ENCODE measurements at regions of chr18 and their contacts with region 1.

Region 1: GRCh38 chr18:58975781-58976180 is 111.1 kb downstream of the ZNF532 start:
- DNase-seq: no peak
- ATAC-seq: no peak
- H3K4me3 ChIP-seq: no peak overlapping the region
- H3K4me3 Mint-ChIP-seq: no peak overlapping the region
- H3K27ac ChIP-seq: no peak overlapping the region
- H3K27ac Mint-ChIP-seq: no peak overlapping the region
- H3K4me1 ChIP-seq: no peaks in the 10 kb centered on the region
- H3K4me1 Mint-ChIP-seq: no peaks in the 10 kb centered on the region
- H3K27me3 ChIP-seq: peaks cover 0 to 10% of the 10 kb centered on the region in 2 experiments
- H3K27me3 Mint-ChIP-seq: peaks cover 26 to 29% of the 10 kb centered on the region in 2 donors

Region 2: DNA sequence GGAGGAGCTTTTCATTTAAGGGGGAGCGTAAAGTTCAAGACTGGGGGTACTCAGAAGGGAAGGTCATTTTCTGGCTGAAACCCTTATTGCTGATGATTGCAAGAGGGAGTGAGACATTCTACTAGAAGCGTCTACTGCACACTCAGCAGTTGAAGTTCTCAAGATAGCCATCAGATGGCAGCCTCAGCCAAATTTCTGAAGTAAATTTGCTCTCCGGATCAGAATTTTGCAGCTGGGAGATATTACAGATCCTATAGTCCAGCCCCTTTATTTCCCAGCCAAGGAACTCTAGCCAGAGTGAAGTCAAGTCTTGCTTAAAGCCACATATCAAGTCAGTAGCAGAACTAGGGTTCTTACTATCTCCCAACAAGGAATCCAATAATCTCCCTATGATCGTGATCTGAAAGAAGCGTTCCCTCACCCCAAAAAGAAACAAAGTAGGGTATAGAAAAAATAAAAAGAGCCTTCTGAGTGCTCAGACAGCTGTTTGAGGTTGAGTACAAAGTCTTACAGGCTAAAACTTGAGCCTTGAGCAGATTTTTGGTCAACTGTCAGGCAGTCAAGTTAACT is 273.5 kb after region 1 on chr18:
- CTCF ChIA-PET with region 1: interaction called in 1 of 2 experiments, 14 read pairs
- POLR2A ChIA-PET with region 1: no interaction called
- DNase-seq: peak in 7 of 35 experiments; percentile 3 to 48 (median 9)
- ATAC-seq: no peak
- H3K4me3 ChIP-seq: no peak overlapping the region
- H3K4me3 Mint-ChIP-seq: no peak overlapping the region
- H3K27ac ChIP-seq: no peak overlapping the region
- H3K27ac Mint-ChIP-seq: no peak overlapping the region
- H3K4me1 ChIP-seq: no peaks in the 10 kb centered on the region
- H3K4me1 Mint-ChIP-seq: no peaks in the 10 kb centered on the region
- H3K27me3 ChIP-seq: peaks cover 10% of the 10 kb centered on the region in 2 experiments
- H3K27me3 Mint-ChIP-seq: peaks cover 55% of the 10 kb centered on the region in 2 donors

Region 3: DNA sequence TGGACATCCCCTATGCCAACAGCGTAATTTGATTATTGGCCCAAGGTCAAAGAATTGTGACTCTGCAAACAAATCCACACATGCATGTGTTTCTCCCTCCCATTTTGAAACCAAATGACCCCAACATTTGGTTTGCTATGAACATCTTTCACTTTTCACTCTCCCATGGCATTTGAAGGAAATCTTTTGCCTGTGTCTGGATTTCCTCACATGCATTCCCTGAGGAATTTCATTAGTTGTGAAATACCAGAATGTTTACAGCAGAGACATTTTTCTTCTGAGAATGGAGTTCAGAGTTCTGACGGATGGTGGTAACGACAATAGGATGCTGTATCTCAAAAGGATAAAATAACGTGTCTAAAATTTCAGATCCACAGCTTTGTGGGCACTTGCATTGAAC is 443.6 kb after region 1 on chr18:
- CTCF ChIA-PET with region 1: no interaction called
- POLR2A ChIA-PET with region 1: no interaction called
- DNase-seq: no peak
- ATAC-seq: no peak
- H3K4me3 ChIP-seq: no peak overlapping the region
- H3K4me3 Mint-ChIP-seq: no peak overlapping the region
- H3K27ac ChIP-seq: no peak overlapping the region
- H3K27ac Mint-ChIP-seq: no peak overlapping the region
- H3K4me1 ChIP-seq: no peaks in the 10 kb centered on the region
- H3K4me1 Mint-ChIP-seq: no peaks in the 10 kb centered on the region
- H3K27me3 ChIP-seq: peaks cover 0 to 19% of the 10 kb centered on the region in 2 experiments
- H3K27me3 Mint-ChIP-seq: peaks cover 29 to 34% of the 10 kb centered on the region in 2 donors